ENCODE measurements at regions of chr19 and their contacts with region 1.

Region 1: GRCh38 chr19:44845612-44846454 is at the start of gene NECTIN2:
- DNase-seq: peak; percentile 97
- ATAC-seq: peak; percentile 76 to 77
- H3K4me3 ChIP-seq: peak within 1 kb of the TSS; percentile 76 to 96 (median 90)
- H3K27ac ChIP-seq: peak within 1 kb of the TSS; percentile 82 to 93 (median 90)
- H3K4me1 ChIP-seq: peaks cover 12 to 23% of the 10 kb centered on the region in 2 donors
- H3K27me3 ChIP-seq: no peaks in the 10 kb centered on the region
- CTCF ChIP-seq: peak; percentile 43 to 67 (median 59)
- POLR2A ChIP-seq: peak; percentile 78 to 87
- total RNA-seq, gene NECTIN2: 10.3 to 20.8 (median 16.7) TPM

Region 2: DNA sequence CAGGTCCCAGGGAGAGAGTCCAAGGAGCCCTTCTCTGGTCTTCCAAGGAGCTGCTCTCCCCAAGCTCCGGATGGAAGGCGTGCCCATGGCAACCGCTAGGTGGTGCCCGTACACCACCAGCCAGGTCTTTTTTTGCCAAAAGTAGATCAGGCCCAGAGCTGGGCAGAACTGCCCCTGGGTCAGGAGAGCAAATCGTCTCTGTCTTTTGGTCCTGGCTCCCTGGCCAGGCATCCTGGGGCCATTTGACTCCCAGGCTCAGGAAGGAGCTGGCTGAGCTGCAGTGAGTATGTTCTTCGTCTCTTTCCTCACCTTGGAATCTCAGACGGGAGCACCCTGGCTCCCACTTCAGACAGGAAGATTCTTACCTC is 121.9 kb before region 1 on chr19:
- in situ Hi-C with region 1: no loop called
- intact Hi-C with region 1: loop called (anchors 5 kb)
- DNase-seq: peak; percentile 67 to 82
- ATAC-seq: peak; percentile 89 to 94
- H3K4me3 ChIP-seq: no peak overlapping the region
- H3K27ac ChIP-seq: peak overlapping the region; percentile 19 to 64 (median 38)
- H3K4me1 ChIP-seq: peaks cover 14 to 21% of the 10 kb centered on the region in 2 donors
- H3K27me3 ChIP-seq: no peaks in the 10 kb centered on the region
- CTCF ChIP-seq: peak; percentile 97 to 100 (median 99)
- POLR2A ChIP-seq: no peak

Region 3: DNA sequence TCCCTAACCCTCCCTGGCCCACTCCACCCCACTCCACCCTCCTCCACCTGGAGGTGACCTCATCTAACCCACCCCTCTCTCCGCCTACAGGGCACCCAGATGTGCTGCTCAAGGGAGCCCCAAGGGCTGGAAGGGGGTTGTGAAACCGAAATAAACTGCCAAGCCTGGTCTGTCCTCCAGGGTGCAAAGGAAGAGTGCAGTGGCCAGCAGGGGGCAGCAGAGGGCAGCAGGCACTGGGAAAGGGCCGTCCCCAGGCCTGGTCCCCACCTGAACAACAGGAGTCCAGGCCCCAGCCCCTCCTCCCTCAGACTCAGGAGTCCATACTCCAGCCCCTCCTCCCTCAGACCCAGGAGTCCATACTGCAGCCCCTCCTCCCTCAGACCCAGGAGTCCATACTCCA is 45.4 kb before region 1 on chr19:
- in situ Hi-C with region 1: loop called in 2 of 4 experiments (anchors 5 kb)
- intact Hi-C with region 1: loop called (anchors 1 kb)
- DNase-seq: peak; percentile 48 to 73
- ATAC-seq: peak; percentile 73 to 88
- H3K4me3 ChIP-seq: no peak overlapping the region
- H3K27ac ChIP-seq: no peak overlapping the region
- H3K4me1 ChIP-seq: peaks cover 9 to 14% of the 10 kb centered on the region in 2 donors
- H3K27me3 ChIP-seq: no peaks in the 10 kb centered on the region
- CTCF ChIP-seq: peak; percentile 86 to 95 (median 89)
- POLR2A ChIP-seq: no peak

Region 4: GRCh38 chr19:44954824-44955586 is 109.2 kb after region 1 on chr19 and contains the start of gene CLPTM1:
- in situ Hi-C with region 1: no loop called
- intact Hi-C with region 1: loop called (anchors 5 kb)
- DNase-seq: peak; percentile 95 to 96
- ATAC-seq: peak; percentile 90 to 95
- H3K4me3 ChIP-seq: peak within 1 kb of the TSS; percentile 93 to 99 (median 96)
- H3K27ac ChIP-seq: peak within 1 kb of the TSS; percentile 89 to 95 (median 92)
- H3K4me1 ChIP-seq: peaks cover 44 to 45% of the 10 kb centered on the region in 2 donors
- H3K27me3 ChIP-seq: no peaks in the 10 kb centered on the region
- CTCF ChIP-seq: peak in 2 of 5 experiments; percentile 56 to 69
- POLR2A ChIP-seq: peak; percentile 59 to 63
- total RNA-seq, gene CLPTM1: 61.3 to 116 (median 89.4) TPM

Region 5: DNA sequence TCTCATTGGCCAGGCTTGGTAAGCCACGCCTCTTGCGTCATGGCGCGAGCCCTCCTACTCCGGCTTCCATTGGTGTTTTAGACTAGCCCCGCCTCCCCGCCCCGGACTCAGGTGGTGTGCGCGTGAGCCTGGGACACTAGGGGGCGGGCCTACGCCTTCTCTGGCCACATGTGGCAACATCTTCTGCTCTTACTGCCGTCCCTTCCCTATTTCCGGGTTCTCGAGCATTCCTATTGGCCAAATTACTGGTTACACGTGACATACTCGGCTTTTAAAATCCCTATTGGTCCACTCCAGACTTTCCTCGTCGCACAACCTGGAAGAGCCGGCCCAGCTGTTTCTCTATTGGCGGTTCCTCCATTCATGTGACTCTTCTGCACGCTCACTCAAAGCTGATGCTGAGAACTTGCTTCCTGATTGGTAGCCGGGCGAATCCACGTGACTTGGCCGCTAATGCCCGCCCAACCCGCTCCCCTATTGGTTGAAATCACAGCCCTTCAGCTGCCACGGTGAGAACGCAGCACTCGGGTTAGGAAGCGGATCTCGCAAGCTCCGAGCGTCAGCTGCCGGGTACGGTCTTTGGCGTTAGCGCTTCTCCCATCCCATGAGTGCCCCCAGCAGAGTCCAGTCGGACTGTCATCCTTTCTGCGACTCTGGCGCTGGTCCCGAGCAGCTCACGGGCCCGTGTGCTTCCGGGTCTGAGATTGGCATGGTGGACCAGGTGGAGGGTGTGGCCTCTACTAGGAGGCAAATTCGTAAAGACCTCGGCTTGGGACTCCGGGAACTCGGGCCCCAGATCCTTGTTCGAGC is 332.6 kb after region 1 on chr19 and contains the start of gene BLOC1S3:
- in situ Hi-C with region 1: no loop called
- intact Hi-C with region 1: loop called (anchors 2 kb)
- DNase-seq: peak; percentile 100
- ATAC-seq: peak; percentile 94 to 96
- H3K4me3 ChIP-seq: peak within 1 kb of the TSS; percentile 82 to 93 (median 87)
- H3K27ac ChIP-seq: peak within 1 kb of the TSS; percentile 98 to 100 (median 99)
- H3K4me1 ChIP-seq: peaks cover 16 to 25% of the 10 kb centered on the region in 2 donors
- H3K27me3 ChIP-seq: no peaks in the 10 kb centered on the region
- CTCF ChIP-seq: peak in 4 of 5 experiments; percentile 2 to 39 (median 30)
- POLR2A ChIP-seq: peak; percentile 84 to 94
- total RNA-seq, gene BLOC1S3: 1.9 to 14.9 (median 5.8) TPM